GM18951 (cell line): ENCODE measurements at regions of chr13 and their contacts with region 1.

Region 1: GRCh38 chr13:95834134-95834765 is 157.3 kb downstream of the DNAJC3 start:
- POLR2A ChIP-seq: no peak

Region 2: DNA sequence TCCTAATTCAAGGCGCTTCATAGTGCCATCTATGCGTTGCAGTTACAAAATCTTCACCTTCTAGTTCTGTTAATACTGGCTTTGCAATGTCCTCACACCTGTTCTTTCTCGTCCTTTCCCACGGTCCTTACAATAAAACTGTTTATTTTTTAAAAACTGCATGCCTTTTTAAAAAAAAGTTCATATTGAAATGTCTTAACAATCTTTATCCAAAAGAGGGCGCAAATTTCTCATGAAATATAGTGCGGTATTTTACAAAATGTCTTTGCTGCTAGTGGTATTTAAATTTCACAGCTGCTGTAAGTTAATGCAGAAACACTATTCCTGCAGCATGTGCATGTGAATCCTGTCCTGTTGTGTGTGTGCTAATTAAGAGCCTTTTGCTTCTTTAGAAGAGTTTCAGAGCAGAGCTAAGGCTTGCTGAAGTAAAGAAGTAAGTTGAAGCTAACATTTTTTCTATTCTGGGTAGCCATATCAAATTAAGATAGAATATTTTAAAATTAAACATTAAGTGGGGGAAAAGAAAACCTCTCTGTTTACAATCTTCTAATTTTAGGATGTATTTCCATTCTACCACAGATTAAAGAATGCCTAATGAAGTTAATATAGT is 297.5 kb before region 1 on chr13:
- in situ Hi-C with region 1: loop called (anchors 25 kb)
- POLR2A ChIP-seq: no peak